ENCODE measurements at regions of chr12 and their contacts with region 1.

Region 1: DNA sequence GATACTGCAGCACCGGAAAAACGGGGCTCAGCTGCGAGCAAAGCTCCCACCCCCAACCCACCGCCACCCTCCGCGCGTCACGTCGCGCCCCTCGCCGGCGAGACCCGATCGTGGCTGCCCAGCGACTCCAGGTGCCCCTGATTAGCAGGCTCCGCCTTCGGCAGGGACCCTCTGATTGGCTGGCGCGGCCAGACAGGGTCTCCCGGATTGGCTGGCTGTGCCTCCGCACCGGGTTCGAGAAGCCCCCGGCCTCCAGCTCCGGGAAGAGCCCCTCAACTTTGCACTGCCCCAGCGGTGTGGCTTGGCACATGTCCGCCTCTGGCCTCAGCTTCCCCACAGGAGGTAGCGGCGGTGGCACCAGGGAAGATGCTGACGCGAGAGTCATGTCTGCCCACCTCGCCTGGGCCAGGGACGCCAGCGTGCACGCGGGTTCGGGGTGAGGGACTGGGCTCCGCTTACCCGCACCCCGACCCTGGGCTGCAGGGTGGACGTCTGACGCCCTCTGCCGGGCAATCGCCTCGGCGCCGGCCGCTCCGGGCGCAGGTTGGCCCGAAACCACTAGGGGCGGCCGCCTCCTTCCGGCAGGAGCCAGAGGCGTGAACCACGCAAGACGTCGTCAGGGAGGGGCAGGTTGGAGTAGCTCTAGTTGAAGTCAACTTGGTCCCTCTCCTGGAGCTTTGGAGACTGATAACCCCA is 498 bp upstream of the RHOF start:
- DNase-seq: peak; percentile 97
- H3K4me3 Mint-ChIP-seq: peak overlapping the region; percentile 83
- H3K27ac Mint-ChIP-seq: peak overlapping the region; percentile 92
- H3K4me1 Mint-ChIP-seq: peaks cover 64% of the 10 kb centered on the region
- H3K27me3 Mint-ChIP-seq: no peaks in the 10 kb centered on the region

Region 2: GRCh38 chr12:121351820-121352681 is 441.9 kb before region 1 on chr12 and contains the start of gene ANAPC5:
- CTCF ChIA-PET with region 1: no interaction called
- intact Hi-C with region 1: loop called (anchors 1 kb)
- DNase-seq: peak; percentile 96
- H3K4me3 Mint-ChIP-seq: peak within 1 kb of the TSS; percentile 98
- H3K27ac Mint-ChIP-seq: peak within 1 kb of the TSS; percentile 86
- H3K4me1 Mint-ChIP-seq: peaks cover 25% of the 10 kb centered on the region
- H3K27me3 Mint-ChIP-seq: no peaks in the 10 kb centered on the region
- total RNA-seq, gene ANAPC5: 117 to 119 TPM

Region 3: DNA sequence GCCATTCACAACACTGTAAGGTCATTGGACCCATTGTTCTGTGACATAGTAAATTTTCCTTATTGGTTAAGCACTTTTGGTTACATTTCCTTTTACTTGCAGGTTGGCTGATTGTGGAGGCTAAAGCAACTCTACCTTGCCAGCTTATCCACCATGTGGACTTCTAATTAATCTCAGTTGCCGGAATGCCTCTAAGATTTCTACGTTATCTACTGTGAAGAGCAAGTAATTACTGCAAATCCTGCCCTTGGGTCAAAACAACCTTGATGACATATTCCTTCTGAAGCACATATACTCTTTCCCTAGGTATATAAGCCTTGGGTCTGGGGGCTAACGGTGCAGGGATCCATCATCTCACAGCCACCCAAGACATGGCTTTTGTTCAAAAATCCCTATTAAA is 105.0 kb before region 1 on chr12:
- CTCF ChIA-PET with region 1: interaction called, 119 read pairs
- intact Hi-C with region 1: loop called (anchors 1 kb)
- DNase-seq: no peak
- H3K4me3 Mint-ChIP-seq: no peak overlapping the region
- H3K27ac Mint-ChIP-seq: no peak overlapping the region
- H3K4me1 Mint-ChIP-seq: peaks cover 6% of the 10 kb centered on the region
- H3K27me3 Mint-ChIP-seq: no peaks in the 10 kb centered on the region

Region 4: GRCh38 chr12:121781998-121782979 is 11.7 kb before region 1 on chr12:
- CTCF ChIA-PET with region 1: interaction called, 381 read pairs
- intact Hi-C with region 1: loop called (anchors 1 kb)
- DNase-seq: peak; percentile 91
- H3K4me3 Mint-ChIP-seq: peak overlapping the region; percentile 69
- H3K27ac Mint-ChIP-seq: peak overlapping the region; percentile 98
- H3K4me1 Mint-ChIP-seq: peaks cover 76% of the 10 kb centered on the region
- H3K27me3 Mint-ChIP-seq: no peaks in the 10 kb centered on the region

Region 5: GRCh38 chr12:121888478-121889266 is 94.7 kb after region 1 on chr12 and contains the start of gene PSMD9:
- CTCF ChIA-PET with region 1: interaction called, 72 read pairs
- intact Hi-C with region 1: loop called (anchors 1 kb)
- DNase-seq: peak; percentile 99
- H3K4me3 Mint-ChIP-seq: peak within 1 kb of the TSS; percentile 98
- H3K27ac Mint-ChIP-seq: peak within 1 kb of the TSS; percentile 94
- H3K4me1 Mint-ChIP-seq: peaks cover 37% of the 10 kb centered on the region
- H3K27me3 Mint-ChIP-seq: no peaks in the 10 kb centered on the region
- total RNA-seq, gene PSMD9: 56.6 to 60.6 TPM

Region 6: DNA sequence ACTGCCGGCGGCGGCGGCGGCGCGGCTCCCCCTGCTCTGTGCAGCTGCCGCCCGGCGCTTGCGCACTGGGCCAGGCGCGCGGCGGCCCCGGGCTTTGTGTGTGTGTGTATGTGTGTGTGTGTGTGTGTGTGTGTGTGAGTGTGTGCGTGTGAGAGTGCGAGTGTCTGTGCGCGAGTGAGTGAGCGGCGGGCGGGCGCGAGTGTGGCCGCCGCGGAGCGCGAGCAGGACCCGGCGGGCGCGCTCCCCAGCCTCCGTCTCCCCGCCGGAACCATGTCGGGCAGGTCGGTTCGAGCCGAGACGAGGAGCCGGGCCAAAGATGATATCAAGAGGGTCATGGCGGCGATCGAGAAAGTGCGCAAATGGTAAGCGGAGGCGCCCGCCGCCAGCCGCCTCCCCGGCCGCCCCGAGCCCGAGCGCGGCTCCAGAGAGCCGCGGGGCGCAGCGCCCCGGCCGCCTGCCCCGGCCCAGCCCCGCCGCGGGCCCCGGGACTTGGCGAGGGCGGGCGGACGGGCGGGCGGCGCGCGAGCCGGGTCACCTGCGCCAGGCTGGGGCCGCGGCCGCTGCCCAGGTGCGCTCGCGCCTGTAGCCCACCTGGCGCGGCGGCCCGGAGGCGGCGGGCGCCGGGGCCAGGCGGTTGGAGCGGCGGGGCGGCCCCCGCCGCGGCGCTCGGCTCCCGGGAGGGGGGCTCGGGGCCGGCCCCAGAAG is 228.0 kb after region 1 on chr12 and contains the start of gene BCL7A:
- CTCF ChIA-PET with region 1: no interaction called
- intact Hi-C with region 1: loop called (anchors 5 kb)
- DNase-seq: peak; percentile 60
- H3K4me3 Mint-ChIP-seq: peak within 1 kb of the TSS; percentile 87
- H3K27ac Mint-ChIP-seq: no peak within 1 kb of the TSS
- H3K4me1 Mint-ChIP-seq: peaks cover 8% of the 10 kb centered on the region
- H3K27me3 Mint-ChIP-seq: peaks cover 15% of the 10 kb centered on the region
- total RNA-seq, gene BCL7A: 6.1 to 6.2 TPM

Region 7: DNA sequence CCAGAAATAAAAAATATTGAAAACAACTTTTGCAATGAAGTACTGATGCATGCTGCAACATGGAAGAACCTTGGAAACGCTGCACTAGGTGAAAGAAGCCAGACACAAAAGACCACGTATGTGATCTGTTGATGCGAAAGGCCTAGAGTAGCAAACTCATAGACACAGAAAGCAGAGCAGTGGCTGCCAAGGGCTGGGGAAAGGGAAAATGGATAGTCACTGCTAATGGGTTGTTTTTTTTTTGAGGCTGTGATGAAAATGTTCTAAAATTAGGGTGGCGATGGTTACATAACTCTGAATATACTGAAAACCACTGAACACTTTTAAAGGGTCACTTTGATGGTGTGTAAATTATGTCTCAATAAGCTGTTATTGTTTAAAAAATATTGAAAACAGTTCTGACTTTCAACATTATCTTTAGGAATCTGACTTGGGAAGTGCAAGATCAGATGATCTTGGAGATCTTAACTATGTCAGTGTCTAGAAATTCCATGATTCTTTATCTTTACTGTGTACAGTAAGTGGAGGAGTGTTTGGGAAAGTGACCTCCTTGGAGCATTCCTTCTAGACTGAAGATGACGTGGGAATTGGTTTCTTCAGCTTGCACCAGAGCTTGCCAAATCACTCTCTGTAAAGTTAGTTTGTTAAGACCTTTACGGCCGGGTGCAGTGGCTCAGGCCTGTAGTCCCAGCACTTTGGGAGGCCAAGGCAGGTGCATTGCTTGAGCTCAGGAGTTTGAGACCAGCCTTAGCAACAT is 297.0 kb after region 1 on chr12:
- CTCF ChIA-PET with region 1: no interaction called
- intact Hi-C with region 1: no loop called
- DNase-seq: no peak
- H3K4me3 Mint-ChIP-seq: no peak overlapping the region
- H3K27ac Mint-ChIP-seq: no peak overlapping the region
- H3K4me1 Mint-ChIP-seq: peaks cover 58% of the 10 kb centered on the region
- H3K27me3 Mint-ChIP-seq: no peaks in the 10 kb centered on the region